ENCODE measurements at regions of chr12 and their contacts with region 1.

Region 1: GRCh38 chr12:31238764-31239387 is 87.1 kb downstream of the SINHCAF start:
- DNase-seq: peak; percentile 77
- CTCF ChIP-seq: peak; percentile 79

Region 2: GRCh38 chr12:30847259-30847658 is 391.6 kb before region 1 on chr12:
- in situ Hi-C with region 1: loop called (anchors 25 kb)
- DNase-seq: no peak
- CTCF ChIP-seq: peak; percentile 84

Region 3: DNA sequence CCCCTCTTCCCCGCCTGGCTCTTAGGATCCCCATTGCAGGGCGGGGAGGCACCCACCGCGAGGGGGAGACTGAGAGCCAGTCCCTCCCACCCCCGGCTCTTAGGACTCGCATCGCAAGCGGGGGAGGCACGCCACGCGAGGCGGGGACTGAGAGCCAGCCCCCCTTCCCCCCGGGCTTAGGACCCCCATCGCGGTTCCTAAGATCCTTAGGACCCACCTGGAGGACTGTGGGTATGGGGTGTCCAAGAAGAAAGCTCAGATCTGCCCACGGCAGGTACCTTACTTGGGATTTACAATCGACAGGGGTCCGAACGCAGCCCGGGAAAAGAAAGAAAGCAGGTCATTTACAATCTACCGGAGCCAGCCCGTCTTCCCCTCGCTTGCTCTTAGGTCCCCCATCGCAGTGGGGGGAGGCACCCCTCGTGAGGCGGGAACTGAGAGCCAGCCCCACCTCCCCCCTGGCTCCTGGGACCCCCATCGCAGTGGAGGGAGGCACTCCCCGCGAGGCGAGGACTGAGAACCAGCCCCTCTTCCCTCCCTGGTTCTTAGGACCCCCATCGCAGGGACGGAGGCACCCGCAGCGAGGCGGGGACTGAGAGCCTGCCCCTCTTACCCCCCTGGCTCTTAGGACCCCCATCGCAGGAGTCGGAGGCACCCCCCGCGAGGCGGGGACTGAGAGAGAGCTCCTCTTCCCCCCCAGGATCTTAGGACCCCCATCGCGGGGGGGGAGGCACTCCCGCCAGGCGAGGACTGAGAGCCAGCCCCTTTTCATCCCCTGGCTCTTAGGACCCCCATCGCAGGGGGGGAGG is 121.5 kb before region 1 on chr12:
- in situ Hi-C with region 1: loop called (anchors 25 kb)
- DNase-seq: peak; percentile 72
- CTCF ChIP-seq: peak; percentile 77